Aorta (tissue), 5 donors: ENCODE measurements at regions of chr4 and their contacts with region 1.

Region 1: DNA sequence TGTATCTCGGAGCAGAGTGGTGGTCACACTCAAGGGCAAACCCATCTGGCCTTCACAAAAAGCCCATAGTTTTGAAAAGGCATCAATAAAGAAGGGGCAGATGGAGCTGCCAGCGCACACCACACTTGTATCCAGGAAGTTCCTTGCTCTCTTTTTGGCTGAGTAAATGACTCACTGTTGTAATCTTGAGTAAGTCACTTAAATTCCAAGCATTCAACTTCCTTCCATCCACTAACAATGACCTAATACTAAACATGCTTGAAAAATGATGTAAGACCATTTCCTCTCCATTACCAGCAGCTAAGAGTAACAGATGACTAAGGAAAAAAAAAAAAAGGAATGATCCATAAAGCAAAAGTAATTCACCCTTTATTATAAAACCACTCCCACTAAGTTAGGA is 32.4 kb upstream of the MYOZ2 start:
- DNase-seq: peak; percentile 75 to 83
- ATAC-seq: peak; percentile 84
- H3K4me3 ChIP-seq: no peak overlapping the region
- H3K27ac ChIP-seq: peak overlapping the region in 1 of 2 donors; percentile 75
- H3K4me1 ChIP-seq: peaks cover 5 to 8% of the 10 kb centered on the region in 2 donors
- H3K27me3 ChIP-seq: no peaks in the 10 kb centered on the region

Region 2: DNA sequence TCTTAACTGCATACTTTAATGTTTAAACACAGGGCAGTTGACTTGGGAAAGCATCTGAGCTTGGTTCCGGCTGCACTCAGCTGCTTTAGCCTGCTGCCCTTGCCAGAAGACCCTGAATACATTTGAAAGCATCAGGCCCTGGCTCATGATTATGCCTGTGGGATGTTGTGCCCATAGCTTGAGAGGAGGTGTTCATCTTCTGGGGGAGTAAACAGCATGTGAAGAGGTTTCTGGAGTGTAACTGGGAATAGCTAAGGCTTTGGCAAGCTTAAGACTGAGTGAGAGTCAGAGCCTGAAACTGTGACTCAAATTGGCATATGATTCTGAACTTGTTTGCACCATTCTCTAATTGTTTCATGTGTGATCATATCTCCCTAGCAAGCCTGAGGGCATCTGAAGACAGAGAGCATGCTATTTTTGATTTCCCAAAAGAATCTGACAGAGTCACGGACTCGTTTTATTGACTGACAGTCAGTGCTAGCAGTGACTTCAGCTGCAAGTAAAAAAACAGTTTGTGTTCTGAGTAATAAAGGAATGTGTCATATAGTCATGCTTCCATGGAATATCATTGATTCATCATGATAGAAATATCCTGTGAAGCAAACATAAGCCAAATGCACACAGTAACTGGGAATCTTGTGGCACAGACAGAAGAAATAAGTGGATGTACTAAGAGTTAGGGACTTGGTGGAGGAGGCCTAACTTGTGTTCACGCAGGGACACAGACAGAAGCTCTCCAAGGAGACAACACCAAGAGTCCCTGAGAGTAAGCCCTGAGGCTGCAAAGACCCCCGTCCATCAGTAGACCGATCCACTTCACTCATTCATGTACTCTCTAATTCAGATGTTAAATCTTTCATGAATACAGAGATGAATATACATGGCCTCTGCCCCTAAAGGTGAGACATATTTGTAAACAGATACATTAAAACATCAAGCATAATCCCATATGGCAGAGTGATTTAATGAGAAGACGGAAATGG is 113.9 kb before region 1 on chr4:
- intact Hi-C with region 1: loop called (anchors 5 to 10 kb)
- DNase-seq: no peak
- ATAC-seq: peak; percentile 67
- H3K4me3 ChIP-seq: no peak overlapping the region
- H3K27ac ChIP-seq: peak overlapping the region; percentile 91 to 98
- H3K4me1 ChIP-seq: peaks cover 9 to 21% of the 10 kb centered on the region in 2 donors
- H3K27me3 ChIP-seq: no peaks in the 10 kb centered on the region

Region 3: DNA sequence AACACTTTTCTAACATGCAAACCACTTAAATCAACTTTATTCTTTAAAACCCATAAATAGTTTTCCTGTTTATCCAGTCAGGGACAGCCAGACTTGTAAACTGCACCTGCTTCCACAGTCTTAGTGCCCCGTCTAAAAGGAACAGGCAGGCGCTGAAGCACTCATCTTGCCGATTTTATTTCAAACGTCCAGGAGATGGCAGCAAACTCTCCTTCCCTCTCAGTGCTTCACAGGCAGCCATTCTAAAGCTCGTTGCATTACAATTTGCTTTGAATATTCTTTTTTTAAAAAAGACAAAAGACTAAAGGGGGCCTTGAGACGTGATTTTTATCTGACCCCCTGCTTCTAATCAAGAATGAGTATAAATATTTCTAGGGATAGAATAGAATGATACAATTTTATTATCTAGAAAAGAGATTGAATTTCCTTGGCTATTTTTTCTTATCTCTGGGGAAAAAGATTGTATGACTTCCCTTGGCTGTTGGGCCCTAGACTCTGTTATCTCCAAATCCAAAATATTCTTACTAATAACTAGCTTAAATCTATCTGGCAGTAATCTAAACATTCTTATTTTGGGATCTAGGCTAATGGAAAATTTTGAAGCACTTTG is 61.2 kb before region 1 on chr4:
- intact Hi-C with region 1: loop called in 1 of 2 experiments (anchors 5 kb)
- DNase-seq: peak; percentile 50 to 59
- ATAC-seq: peak; percentile 78
- H3K4me3 ChIP-seq: peak overlapping the region in 1 of 2 donors; percentile 48
- H3K27ac ChIP-seq: peak overlapping the region in 1 of 2 donors; percentile 90
- H3K4me1 ChIP-seq: peaks cover 4 to 11% of the 10 kb centered on the region in 2 donors
- H3K27me3 ChIP-seq: no peaks in the 10 kb centered on the region

Region 4: DNA sequence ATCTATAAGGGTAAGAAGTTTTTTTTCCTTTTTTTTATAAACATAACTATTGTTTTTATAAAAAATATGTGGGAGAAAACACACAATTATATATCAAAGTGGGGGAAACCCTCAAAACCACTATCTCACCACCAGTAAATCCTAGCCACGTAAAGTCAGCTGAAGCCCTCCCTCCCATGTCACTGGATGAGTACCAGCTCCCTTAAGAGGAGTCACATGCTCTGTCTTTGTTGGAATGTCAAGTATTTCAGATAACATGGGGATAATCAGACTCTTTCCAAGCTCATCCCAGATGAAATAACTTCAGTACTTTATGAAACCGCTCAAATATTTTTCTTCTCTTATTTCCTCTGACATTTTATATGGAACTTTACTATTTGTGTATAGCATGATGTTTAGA is 34.8 kb after region 1 on chr4:
- intact Hi-C with region 1: loop called in 1 of 2 experiments (anchors 5 kb)
- DNase-seq: no peak
- ATAC-seq: no peak
- H3K4me3 ChIP-seq: no peak overlapping the region
- H3K27ac ChIP-seq: no peak overlapping the region
- H3K4me1 ChIP-seq: peaks cover 3 to 10% of the 10 kb centered on the region in 2 donors
- H3K27me3 ChIP-seq: no peaks in the 10 kb centered on the region